ENCODE measurements at regions of chr4 and their contacts with region 1.

Region 1: DNA sequence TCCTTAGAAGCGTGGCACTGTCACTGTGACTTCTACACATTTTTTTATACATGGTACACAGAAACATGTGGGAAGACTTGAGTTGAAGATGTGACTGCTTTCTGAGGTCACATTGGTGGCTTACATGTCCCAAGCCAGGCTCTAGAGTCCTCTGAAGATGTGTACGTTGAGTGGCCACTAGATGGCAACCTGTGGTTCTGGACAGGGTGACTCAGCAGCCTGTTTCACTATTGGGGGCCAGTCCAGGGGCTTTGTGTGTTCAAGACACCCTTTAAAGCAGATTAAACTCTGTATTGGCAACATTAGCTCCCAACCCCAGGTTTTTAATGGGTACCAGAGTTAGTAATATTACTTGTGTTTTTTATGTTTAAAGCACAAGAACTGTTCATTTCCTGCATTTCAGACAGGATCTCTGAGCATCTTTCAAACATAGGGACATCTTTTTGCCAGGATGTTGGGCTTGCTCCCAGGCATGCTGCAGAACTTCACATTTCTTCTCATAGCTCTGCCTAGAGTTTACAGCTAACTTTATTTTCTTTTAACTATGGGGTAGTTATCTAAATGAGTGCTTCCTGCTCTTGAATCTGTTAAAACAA is 53.0 kb downstream of the DCUN1D4 start:
- DNase-seq: peak; percentile 44 to 62
- ATAC-seq: peak; percentile 92

Region 2: GRCh38 chr4:52019936-52020657 is 124.2 kb after region 1 on chr4 and contains the start of gene LRRC66:
- intact Hi-C with region 1: loop called in 1 of 2 experiments (anchors 5 kb)
- DNase-seq: peak; percentile 87 to 88
- ATAC-seq: peak; percentile 86
- total RNA-seq, gene LRRC66: 10.2 to 16.1 TPM

Region 3: GRCh38 chr4:52420330-52420729 is 524.4 kb after region 1 on chr4:
- intact Hi-C with region 1: no loop called
- DNase-seq: no peak
- ATAC-seq: no peak

Measured in left colon (tissue), 2 donors.